Ascending aorta (tissue), 2 donors: ENCODE measurements at regions of chr7 and their contacts with region 1.

Region 1: GRCh38 chr7:158782761-158783401 is 46.4 kb downstream of the ESYT2 start:
- DNase-seq: peak; percentile 59 to 93
- H3K4me3 ChIP-seq: peak overlapping the region; percentile 28 to 43
- H3K27ac ChIP-seq: peak overlapping the region; percentile 87 to 88
- H3K4me1 ChIP-seq: peaks cover 8 to 54% of the 10 kb centered on the region in 2 donors
- H3K27me3 ChIP-seq: no peaks in the 10 kb centered on the region
- CTCF ChIP-seq: peak; percentile 59 to 67 (median 66)

Region 2: DNA sequence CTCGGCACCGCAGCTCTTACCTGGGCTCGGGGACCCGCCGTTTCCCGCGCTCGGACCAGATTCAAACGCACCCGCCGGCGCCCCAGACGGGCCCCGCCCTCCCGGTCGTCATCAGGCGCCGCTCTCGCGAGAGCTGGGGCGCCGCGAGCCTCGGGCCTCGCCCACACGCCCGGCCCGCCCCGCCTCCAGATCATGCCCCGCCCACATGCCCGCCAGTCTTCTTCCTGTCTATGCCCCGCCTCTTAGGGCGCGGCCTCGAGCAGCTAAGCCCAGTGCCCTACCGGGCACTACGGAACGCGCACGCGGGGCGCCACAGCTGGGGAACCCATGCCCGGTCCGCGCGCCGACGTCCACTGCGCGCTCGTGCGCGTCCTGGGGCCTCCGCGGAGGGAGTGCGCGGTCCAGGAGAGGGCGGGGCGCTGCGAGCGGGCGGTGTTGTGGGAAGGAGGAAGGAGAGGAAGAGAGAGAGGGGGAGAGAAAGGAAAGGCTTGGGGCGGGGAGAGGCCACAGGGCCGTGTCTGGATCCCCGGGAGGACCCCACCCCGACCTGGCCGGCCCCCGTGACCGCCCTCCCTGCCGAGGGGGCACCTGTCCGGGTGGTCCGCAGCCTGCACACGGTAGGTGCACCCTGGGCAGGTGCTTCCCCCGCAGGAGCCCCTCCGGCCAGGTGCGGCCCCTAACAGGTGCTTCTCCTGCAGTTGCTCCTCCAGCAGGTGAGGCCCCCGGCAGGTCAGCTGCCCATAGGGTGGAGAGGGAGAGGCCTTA is 78.0 kb before region 1 on chr7 and contains the start of gene NCAPG2:
- intact Hi-C with region 1: loop called (anchors 1 kb)
- DNase-seq: peak; percentile 91 to 99
- H3K4me3 ChIP-seq: peak within 1 kb of the TSS; percentile 87 to 90
- H3K27ac ChIP-seq: peak within 1 kb of the TSS; percentile 73 to 75
- H3K4me1 ChIP-seq: peaks cover 0 to 3% of the 10 kb centered on the region in 2 donors
- H3K27me3 ChIP-seq: no peaks in the 10 kb centered on the region
- CTCF ChIP-seq: peak in 2 of 3 experiments; percentile 27 to 48
- total RNA-seq, gene NCAPG2: 1.6 TPM

Region 3: GRCh38 chr7:158802473-158803202 is 19.8 kb after region 1 on chr7:
- intact Hi-C with region 1: loop called (anchors 2 kb)
- DNase-seq: no peak
- H3K4me3 ChIP-seq: no peak overlapping the region
- H3K27ac ChIP-seq: peak overlapping the region; percentile 6 to 34
- H3K4me1 ChIP-seq: peaks cover 0 to 14% of the 10 kb centered on the region in 2 donors
- H3K27me3 ChIP-seq: no peaks in the 10 kb centered on the region
- CTCF ChIP-seq: no peak

Region 4: DNA sequence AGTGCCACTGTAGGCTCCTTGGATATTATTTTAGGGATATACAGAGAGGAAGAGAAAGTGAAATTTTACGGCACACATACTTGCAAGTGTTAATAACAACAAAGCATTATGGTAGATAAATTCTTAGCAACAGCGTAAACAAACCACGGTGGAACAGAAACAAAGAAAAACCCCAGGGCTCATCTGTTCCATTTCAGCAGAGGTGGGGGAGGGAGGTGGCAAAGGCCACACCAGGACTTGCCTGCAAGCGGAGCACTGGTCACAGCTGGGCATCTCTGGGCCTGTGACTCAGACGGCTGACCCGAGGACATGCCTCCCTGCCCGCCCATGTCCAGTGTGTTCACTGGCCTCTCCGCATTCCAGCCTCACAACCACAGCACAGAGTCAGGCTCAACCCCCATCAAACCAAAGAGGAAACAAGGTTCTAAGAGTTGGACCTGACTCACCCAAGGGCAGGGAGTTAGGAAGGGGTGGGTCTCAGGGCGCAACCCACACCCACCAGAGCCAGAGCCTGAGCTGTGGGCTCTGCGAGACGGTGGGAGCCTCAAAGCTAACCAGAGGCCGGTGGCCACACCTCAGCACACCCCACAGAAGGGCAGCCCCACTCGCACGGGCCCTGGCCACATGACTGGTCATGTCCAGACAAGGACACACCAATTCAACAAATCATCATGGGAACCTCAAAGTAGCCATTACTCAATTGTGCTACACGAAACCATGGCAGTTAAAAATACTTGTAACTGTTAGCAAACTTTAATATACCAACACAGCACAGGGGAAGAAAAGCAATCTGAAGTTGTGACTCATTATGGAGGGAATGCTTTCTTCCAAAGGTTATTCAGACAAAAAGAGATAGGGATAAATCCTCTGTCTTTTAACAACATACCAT is 35.7 kb after region 1 on chr7:
- intact Hi-C with region 1: loop called (anchors 2 kb)
- DNase-seq: peak; percentile 86 to 97
- H3K4me3 ChIP-seq: peak overlapping the region; percentile 41 to 57
- H3K27ac ChIP-seq: peak overlapping the region; percentile 89 to 95
- H3K4me1 ChIP-seq: peaks cover 33 to 75% of the 10 kb centered on the region in 2 donors
- H3K27me3 ChIP-seq: no peaks in the 10 kb centered on the region
- CTCF ChIP-seq: no peak

Region 5: DNA sequence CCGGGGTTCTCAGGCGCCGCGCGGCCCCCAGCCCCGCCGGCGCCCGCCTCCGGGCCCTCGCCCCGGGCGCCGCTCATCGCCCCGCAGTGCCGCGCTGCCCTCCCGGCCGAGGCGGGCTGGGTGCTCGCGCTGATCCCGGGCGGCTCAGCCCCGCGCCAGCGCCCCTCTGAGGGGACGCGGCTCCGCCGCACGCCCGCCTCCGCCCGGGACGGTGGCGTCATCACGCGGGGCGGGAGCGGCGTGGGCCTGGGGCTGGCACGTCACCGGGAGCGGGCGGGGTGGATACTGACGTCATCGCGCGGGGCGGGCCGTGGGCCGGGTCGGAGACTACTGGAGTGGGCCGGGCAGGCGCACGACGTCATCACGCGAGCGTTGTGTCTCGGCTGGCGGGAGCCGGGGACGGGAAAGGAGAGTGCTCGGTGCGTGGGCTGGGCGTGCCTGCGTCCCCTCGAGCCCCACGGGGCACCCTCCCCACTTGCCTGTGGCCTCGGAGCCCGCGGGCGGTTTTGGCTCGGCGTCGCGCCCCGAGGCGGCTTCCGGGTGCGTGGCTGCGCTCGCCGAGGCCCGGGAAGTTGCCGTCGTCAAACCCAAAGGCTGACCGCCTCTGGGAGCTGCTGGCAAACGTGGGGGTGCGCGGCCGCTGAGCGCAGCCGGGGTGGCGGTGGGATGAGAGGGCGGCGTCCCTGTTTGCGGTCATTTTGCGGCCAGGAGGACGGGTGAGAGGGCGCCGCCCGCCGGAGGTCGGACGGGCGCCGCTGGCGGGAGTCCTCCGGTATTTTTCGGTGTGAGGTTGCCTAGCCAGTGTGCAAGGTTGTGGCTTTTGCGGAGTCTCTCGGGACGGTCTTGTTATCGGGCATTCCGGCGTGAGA is 46.7 kb after region 1 on chr7 and contains the start of gene ESYT2:
- intact Hi-C with region 1: loop called (anchors 1 kb)
- DNase-seq: peak; percentile 90 to 98
- H3K4me3 ChIP-seq: peak within 1 kb of the TSS; percentile 74 to 90
- H3K27ac ChIP-seq: peak within 1 kb of the TSS; percentile 97 to 100
- H3K4me1 ChIP-seq: peaks cover 0 to 14% of the 10 kb centered on the region in 2 donors
- H3K27me3 ChIP-seq: no peaks in the 10 kb centered on the region
- CTCF ChIP-seq: peak in 2 of 3 experiments; percentile 42 to 44
- total RNA-seq, gene ESYT2: 102 TPM

Region 6: GRCh38 chr7:158856883-158857668 is 74.2 kb after region 1 on chr7:
- intact Hi-C with region 1: loop called (anchors 1 kb)
- DNase-seq: no peak
- H3K4me3 ChIP-seq: peak overlapping the region; percentile 81 to 97
- H3K27ac ChIP-seq: peak overlapping the region; percentile 70 to 83
- H3K4me1 ChIP-seq: peaks cover 10% of the 10 kb centered on the region in 2 donors
- H3K27me3 ChIP-seq: no peaks in the 10 kb centered on the region
- CTCF ChIP-seq: no peak

Region 7: GRCh38 chr7:158976849-158977593 is 194.1 kb after region 1 on chr7:
- intact Hi-C with region 1: loop called (anchors 2 kb)
- DNase-seq: peak; percentile 43 to 91
- H3K4me3 ChIP-seq: peak overlapping the region; percentile 48 to 50
- H3K27ac ChIP-seq: peak overlapping the region in 1 of 2 donors; percentile 17
- H3K4me1 ChIP-seq: peaks cover 2 to 8% of the 10 kb centered on the region in 2 donors
- H3K27me3 ChIP-seq: no peaks in the 10 kb centered on the region
- CTCF ChIP-seq: peak; percentile 75 to 96 (median 84)